ENCODE measurements at regions of chr15 and their contacts with region 1.

Region 1: GRCh38 chr15:70362886-70363285 is 265.2 kb upstream of the TLE3 start:
- DNase-seq: no peak
- H3K4me3 ChIP-seq: no peak overlapping the region
- H3K27ac ChIP-seq: no peak overlapping the region
- H3K4me1 ChIP-seq: no peaks in the 10 kb centered on the region
- H3K27me3 ChIP-seq: no peaks in the 10 kb centered on the region
- CTCF ChIP-seq: peak; percentile 62 to 75 (median 67)
- EP300 ChIP-seq: no peak
- POLR2A ChIP-seq: no peak

Region 2: GRCh38 chr15:69475769-69476358 is 887.0 kb before region 1 on chr15:
- intact Hi-C with region 1: loop called (anchors 10 kb)
- DNase-seq: no peak
- H3K4me3 ChIP-seq: no peak overlapping the region
- H3K27ac ChIP-seq: no peak overlapping the region
- H3K4me1 ChIP-seq: peaks cover 0 to 10% (median 3%) of the 10 kb centered on the region in 4 donors
- H3K27me3 ChIP-seq: peaks cover 0 to 3% (median 0%) of the 10 kb centered on the region in 4 donors
- CTCF ChIP-seq: peak; percentile 86 to 94 (median 91)
- EP300 ChIP-seq: no peak
- POLR2A ChIP-seq: no peak

Region 3: DNA sequence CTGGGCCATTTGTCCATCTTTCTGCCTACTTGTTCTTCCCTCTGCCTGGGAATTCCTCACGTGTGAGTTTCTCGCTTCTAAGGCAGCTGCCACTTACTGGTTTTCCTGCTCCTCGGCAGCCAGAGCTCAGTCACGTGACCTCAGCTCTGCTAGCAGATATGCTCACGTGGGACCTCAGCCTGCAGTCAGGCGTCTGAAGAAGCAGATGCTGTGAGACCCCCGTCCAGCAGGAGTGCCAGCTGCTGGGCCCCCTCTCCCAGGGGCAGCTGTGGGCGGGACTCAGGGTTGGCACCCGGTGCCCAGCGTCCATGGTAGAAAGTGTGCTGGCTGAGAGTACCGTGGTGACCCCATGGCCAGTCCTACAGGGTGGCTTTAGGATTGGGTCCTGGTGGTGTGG is 103.9 kb before region 1 on chr15:
- intact Hi-C with region 1: no loop called
- DNase-seq: peak; percentile 94
- H3K4me3 ChIP-seq: no peak overlapping the region
- H3K27ac ChIP-seq: no peak overlapping the region
- H3K4me1 ChIP-seq: peaks cover 19 to 34% (median 31%) of the 10 kb centered on the region in 4 donors
- H3K27me3 ChIP-seq: no peaks in the 10 kb centered on the region
- CTCF ChIP-seq: no peak
- EP300 ChIP-seq: no peak
- POLR2A ChIP-seq: no peak